Activated CD4-positive, alpha-beta T cell treated with anti-CD3 and anti-CD28 coated beads, Interleukin-2, amount 10 ng/mL, durations not matched to agents 7 days and 5 days (primary cell): ENCODE measurements at regions of chr11 and their contacts with region 1.

Region 1: DNA sequence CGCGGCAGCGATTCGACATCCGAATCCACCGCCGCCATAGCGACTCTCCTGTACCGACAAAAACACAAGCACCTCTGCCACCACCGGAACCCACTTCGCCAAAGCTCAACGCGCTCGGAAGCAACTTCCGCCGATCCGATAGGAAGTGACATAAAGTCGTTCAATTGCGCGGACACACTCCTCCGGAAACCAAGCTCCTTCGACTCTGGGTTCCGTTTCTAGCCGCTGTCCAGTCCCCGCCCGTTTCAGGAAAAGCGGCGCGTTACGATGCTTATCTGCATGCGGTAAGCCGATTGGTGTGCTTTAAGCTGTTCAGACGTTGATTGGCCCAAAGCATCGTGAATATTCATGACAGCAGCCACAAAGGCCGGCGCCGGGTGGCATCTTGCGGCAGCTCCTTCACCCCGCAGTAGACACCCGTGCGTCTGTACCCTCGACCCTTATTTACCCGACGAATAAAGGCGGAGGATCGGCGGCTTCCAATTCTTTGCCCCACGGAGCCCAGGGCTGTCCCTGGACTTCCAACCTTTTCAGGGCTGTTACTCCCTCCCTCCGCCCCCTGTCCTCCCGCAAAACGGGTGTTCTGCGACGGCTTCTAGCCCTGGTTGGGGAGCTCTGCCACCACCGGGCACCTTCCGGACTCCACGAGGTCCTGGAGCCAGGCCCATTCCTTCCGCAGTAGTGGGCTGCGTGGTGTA is at the start of gene TUT1:
- DNase-seq: peak; percentile 98
- H3K4me3 Mint-ChIP-seq: peak within 1 kb of the TSS; percentile 97
- H3K27ac Mint-ChIP-seq: peak within 1 kb of the TSS; percentile 95
- H3K4me1 Mint-ChIP-seq: peaks cover 58% of the 10 kb centered on the region
- H3K27me3 Mint-ChIP-seq: no peaks in the 10 kb centered on the region
- total RNA-seq, gene TUT1: 24.1 to 26.0 TPM

Region 2: GRCh38 chr11:62472012-62472884 is 119.3 kb before region 1 on chr11:
- CTCF ChIA-PET with region 1: no interaction called
- POLR2A ChIA-PET with region 1: no interaction called
- DNase-seq: no peak
- H3K4me3 Mint-ChIP-seq: no peak overlapping the region
- H3K27ac Mint-ChIP-seq: no peak overlapping the region
- H3K4me1 Mint-ChIP-seq: peaks cover 10% of the 10 kb centered on the region
- H3K27me3 Mint-ChIP-seq: no peaks in the 10 kb centered on the region

Region 3: DNA sequence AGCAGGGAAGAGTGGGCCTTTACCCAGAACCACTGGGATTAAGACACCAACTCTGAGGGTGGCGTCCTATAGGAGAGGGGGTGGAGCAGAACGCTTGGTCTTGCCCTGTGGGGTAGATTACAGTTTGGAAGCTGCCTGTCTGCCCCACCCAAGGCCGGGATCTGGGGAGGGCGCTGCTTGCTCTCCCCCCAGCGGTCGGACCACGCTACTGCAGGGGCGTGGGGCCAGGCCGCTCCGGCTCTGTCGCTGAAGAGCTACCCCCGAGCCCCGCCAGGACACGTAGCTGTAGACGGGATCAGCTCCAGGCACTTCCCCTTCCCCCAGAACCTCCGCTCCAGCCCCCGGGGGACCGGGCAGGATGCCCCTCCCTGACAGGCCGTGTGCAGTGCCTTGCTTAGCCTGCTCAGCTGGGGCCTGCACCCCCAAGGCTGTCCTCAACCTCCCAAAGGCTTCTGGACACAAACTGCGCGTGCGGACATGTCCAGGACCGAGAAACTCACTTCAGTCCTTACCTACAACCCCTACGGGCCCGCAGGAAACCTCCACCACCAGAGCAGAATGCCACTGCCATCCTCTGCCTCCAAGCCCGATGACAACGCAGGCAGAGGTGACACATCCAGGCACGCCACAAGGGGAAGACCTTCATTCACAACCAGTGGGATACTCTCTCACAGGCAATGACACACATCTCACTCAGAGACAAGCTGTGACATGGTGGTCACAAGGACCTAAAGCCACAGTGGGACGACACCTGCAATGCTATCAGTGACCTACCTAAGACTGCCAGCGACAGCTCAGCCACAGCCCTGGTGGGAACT is 48.6 kb before region 1 on chr11:
- CTCF ChIA-PET with region 1: interaction called, 12 read pairs
- POLR2A ChIA-PET with region 1: no interaction called
- DNase-seq: peak; percentile 75
- H3K4me3 Mint-ChIP-seq: peak overlapping the region; percentile 98
- H3K27ac Mint-ChIP-seq: peak overlapping the region; percentile 80
- H3K4me1 Mint-ChIP-seq: peaks cover 76% of the 10 kb centered on the region
- H3K27me3 Mint-ChIP-seq: peaks cover 6% of the 10 kb centered on the region

Region 4: DNA sequence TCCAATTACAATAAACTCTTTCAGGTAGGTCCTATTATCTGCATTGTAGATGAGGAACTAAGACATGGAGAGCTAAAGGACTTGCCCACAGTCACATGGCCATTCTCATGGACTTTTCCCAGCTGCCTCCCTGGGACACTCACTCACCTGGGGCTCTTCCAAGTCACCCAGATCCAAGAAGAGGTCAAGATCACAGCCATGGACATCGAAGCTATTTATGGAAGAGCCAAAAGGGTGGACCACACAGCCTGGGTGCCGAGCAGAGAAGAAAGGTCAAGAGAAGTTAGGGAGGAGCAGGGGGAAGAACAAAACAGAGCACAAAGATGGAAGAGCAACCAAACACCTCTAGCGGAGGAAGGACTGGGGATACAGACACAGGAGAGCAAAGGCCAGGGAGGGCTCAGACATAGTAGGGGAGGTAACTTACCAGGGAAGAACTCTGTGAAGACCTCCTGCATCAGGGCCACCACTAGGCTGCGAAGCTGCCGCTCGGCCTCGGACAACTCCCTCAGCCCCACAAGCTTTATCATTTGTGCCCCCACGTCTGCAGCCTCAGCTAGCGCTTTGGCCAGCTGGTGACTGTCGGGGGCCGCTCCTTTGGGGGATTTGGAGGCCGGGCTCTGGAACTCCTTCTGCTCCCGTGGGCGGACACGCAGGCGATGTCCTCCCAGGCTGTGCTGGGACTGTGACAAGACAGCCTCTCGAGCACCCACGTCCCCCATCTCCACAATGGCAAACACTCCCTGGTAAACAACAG is 10.5 kb before region 1 on chr11:
- CTCF ChIA-PET with region 1: interaction called, 14 read pairs
- POLR2A ChIA-PET with region 1: interaction called, 3 read pairs
- DNase-seq: no peak
- H3K4me3 Mint-ChIP-seq: no peak overlapping the region
- H3K27ac Mint-ChIP-seq: no peak overlapping the region
- H3K4me1 Mint-ChIP-seq: peaks cover 4% of the 10 kb centered on the region
- H3K27me3 Mint-ChIP-seq: no peaks in the 10 kb centered on the region

Region 5: GRCh38 chr11:62665075-62665598 is 73.5 kb after region 1 on chr11 and contains the starts of genes C11orf98 and CSKMT:
- CTCF ChIA-PET with region 1: interaction called, 17 read pairs
- POLR2A ChIA-PET with region 1: interaction called, 14 read pairs
- DNase-seq: peak; percentile 96
- H3K4me3 Mint-ChIP-seq: peak within 1 kb of the TSS; percentile 98
- H3K27ac Mint-ChIP-seq: peak within 1 kb of the TSS; percentile 93
- H3K4me1 Mint-ChIP-seq: peaks cover 41% of the 10 kb centered on the region
- H3K27me3 Mint-ChIP-seq: no peaks in the 10 kb centered on the region
- total RNA-seq, gene C11orf98: 86.0 to 93.9 TPM
- total RNA-seq, gene CSKMT: 11.0 to 18.2 TPM

Region 6: GRCh38 chr11:62694455-62695167 is 103.0 kb after region 1 on chr11:
- CTCF ChIA-PET with region 1: interaction called, 16 read pairs
- POLR2A ChIA-PET with region 1: no interaction called
- DNase-seq: peak; percentile 83
- H3K4me3 Mint-ChIP-seq: no peak overlapping the region
- H3K27ac Mint-ChIP-seq: no peak overlapping the region
- H3K4me1 Mint-ChIP-seq: peaks cover 5% of the 10 kb centered on the region
- H3K27me3 Mint-ChIP-seq: no peaks in the 10 kb centered on the region